Pancreas (tissue), 10 donors: ENCODE measurements at regions of chr12 and their contacts with region 1.

Region 1: DNA sequence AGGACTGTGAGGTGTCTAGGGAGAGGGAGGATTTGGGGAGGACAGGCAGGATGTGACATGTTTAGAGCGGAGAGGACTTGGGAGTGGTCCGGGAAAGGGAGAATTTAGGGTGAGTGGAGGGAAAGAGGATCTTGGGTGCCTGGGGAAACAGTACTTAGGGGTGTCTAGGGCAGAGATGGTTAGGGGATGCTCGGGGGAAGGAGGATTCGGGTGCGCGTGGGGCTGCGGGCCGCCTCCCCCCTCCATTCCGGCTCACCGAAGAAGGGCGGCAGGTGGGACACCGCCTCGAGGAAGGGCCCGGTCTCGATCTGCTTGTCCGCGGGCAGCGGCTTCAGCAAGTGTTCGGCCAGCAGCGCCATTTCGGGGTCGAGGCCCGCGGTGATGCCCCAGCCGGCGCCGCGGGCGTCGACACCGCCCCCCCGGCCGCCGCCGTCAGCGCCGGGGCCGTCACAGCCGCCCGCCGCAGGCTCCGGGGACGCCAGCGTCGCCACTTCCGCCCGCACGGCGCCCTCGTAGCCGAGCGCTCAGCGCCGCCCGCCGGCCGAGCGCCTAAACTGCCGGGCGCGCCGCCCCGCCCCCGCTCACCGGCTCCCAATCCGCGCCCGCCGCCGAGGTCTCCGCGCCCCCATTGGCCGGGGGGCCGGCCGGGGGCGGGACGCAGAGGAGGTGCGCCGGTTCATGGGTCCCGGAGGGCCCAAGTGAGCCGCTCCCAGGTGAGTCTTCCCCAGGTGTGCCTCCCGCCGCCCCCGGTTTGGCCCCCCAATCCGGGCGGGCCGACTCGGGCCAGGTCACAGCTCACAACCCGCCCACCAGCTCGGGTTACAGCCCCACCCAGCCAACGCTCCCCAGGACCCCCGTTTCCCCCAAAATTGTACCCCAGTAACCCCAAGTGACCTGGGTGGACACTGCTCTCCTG is at the start of gene GLTP:
- DNase-seq: peak; percentile 78 to 96 (median 92)
- ATAC-seq: peak; percentile 96 to 98 (median 98)
- H3K4me3 ChIP-seq: peak within 1 kb of the TSS; percentile 51 to 77 (median 62)
- H3K27ac ChIP-seq: peak within 1 kb of the TSS in 1 of 4 donors; percentile 62
- H3K4me1 ChIP-seq: peaks cover 6 to 16% (median 7%) of the 10 kb centered on the region in 3 donors
- H3K27me3 ChIP-seq: no peaks in the 10 kb centered on the region
- CTCF ChIP-seq: peak in 3 of 4 donors; percentile 32 to 46 (median 40)
- total RNA-seq, gene GLTP: 14.7 to 24.9 (median 19.3) TPM

Region 2: DNA sequence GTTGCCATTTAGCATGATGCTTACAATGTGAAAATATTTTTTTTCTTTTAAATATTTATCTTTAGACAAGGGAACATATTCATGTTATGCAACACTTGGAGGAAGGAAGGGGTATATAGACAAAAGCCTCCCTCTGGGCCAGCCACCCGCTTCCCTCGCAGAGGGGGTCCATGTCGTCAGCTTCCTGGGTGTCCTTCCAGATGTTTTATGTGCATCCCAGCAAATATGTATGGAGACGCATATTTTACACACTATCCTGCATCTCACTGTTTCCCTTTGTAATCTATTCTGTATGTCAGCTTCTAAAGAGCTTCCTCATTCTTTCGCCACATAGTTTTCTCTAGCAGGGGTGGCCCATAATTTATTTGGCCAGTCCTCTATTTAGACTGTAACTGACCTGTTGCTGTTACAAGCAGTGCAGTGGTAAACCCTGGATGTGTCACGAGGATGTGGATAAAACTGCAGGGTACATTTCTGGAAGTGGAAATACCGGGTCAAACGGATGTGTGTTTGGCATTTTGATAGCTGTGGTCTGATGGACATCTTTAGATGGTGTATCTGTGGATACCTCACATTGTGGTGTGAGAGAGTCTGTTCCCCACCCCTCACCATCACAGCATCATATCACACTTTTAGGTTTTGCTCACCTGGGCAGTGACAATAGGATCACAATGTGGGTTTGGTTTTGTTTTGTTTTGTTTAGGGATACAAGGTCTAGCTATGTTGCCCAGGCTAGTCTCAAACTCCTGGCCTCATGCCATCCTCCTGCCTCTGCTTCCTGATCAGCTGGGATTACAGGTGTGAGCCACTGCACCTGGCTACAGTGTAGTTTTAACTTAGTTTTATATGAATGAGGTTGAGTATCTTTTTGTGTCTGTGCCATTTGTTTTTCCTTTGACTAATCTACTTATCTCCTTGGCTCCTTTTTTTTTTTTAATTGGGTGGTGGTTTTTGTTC is 135.0 kb before region 1 on chr12:
- intact Hi-C with region 1: no loop called
- DNase-seq: peak; percentile 30 to 59 (median 51)
- ATAC-seq: peak; percentile 54 to 84 (median 74)
- H3K4me3 ChIP-seq: no peak overlapping the region
- H3K27ac ChIP-seq: peak overlapping the region in 2 of 4 donors; percentile 39 to 64
- H3K4me1 ChIP-seq: peaks cover under 1 to 12% (median 11%) of the 10 kb centered on the region in 3 donors
- H3K27me3 ChIP-seq: no peaks in the 10 kb centered on the region
- CTCF ChIP-seq: no peak

Region 3: DNA sequence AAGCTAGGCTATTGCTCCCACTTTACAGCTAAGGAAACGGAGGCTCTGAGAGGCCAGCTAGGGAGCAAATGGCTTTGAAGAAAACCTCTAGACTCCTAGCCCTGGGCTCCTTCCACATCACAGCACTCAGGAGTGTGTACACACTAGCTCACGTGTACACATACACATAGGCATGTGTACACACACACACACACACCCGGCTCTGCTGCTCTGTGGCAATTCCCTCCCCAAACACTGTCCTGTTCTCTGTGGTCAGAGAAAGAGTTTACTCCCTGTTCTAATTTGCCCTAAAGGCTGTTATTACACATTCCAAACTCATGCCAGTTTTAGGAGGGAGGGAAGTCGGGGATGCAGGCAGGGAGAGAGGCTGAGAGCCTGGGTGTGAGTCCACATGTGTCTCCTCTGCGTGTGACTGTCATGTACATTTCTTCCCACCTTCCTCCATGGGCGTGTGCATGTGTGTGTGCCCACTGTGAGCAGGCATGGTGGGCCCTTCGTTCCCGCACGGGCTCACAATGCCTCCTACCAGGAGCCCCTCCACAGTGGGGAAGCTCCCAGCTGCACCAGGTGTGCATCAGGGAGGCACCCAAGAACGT is 61.3 kb before region 1 on chr12:
- intact Hi-C with region 1: loop called in 1 of 3 experiments (anchors 10 kb)
- DNase-seq: no peak
- ATAC-seq: no peak
- H3K4me3 ChIP-seq: no peak overlapping the region
- H3K27ac ChIP-seq: no peak overlapping the region
- H3K4me1 ChIP-seq: peaks cover 5 to 15% (median 11%) of the 10 kb centered on the region in 3 donors
- H3K27me3 ChIP-seq: no peaks in the 10 kb centered on the region
- CTCF ChIP-seq: no peak